HEK293 (cell line): ENCODE measurements at regions of chr2 and their contacts with region 1.

Region 1: DNA sequence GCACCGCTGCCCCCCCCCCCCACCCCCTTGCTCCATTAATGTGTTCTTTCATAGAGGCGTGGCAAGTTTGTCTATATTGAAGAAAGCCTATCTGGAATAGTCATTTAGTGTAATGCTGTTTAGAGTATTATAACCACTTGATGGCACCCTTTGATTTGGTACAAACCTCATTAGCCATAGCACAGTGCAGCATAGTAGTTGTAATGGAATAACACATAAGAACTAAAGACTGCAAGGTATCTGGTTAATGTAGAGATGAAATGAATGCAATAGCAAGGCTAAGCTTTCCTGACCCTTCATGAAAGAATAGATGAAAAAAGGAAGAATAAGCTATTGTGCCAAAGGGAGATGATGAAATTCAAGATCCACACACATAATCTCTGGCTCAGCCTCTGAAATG is 81.9 kb downstream of the EHBP1 start:
- H3K4me3 ChIP-seq: no peak overlapping the region
- H3K27ac ChIP-seq: no peak overlapping the region
- H3K4me1 ChIP-seq: no peaks in the 10 kb centered on the region
- CTCF ChIP-seq: no peak

Region 2: GRCh38 chr2:62774555-62775366 is 12.6 kb before region 1 on chr2:
- CTCF ChIA-PET with region 1: interaction called, 25 read pairs
- POLR2A ChIA-PET with region 1: no interaction called
- H3K4me3 ChIP-seq: no peak overlapping the region
- H3K27ac ChIP-seq: no peak overlapping the region
- H3K4me1 ChIP-seq: no peaks in the 10 kb centered on the region
- CTCF ChIP-seq: no peak

Region 3: DNA sequence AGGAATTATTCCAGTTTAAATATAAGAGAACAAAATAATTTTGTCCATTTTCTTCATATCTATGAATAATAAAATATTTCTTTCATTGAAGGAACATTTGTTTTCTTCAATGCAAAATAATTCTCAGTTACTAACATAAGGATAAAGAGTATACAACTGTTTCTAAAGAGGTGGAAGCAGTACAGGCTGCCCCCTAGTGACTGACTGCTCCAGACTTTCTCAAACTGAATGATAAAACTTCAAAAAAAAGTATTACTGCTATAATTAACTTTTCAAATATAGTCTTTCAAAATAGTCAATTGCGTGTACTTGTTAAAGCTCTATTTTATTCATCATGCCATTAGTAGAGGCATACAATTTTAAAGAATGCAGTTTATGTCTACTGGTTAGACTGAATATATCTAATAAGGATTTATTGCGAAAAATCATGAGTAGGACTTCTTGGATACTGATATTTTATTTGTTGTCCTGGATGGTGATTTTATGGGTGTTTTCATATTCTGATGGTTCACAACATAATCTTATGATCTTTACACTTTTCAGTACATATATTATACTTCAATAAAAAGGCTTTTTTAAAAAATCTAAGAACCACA is 700.8 kb after region 1 on chr2:
- CTCF ChIA-PET with region 1: interaction called, 10 read pairs
- POLR2A ChIA-PET with region 1: no interaction called
- H3K4me3 ChIP-seq: no peak overlapping the region
- H3K27ac ChIP-seq: no peak overlapping the region
- H3K4me1 ChIP-seq: no peaks in the 10 kb centered on the region
- CTCF ChIP-seq: no peak